ENCODE measurements at regions of chr9 and their contacts with region 1.

Region 1: DNA sequence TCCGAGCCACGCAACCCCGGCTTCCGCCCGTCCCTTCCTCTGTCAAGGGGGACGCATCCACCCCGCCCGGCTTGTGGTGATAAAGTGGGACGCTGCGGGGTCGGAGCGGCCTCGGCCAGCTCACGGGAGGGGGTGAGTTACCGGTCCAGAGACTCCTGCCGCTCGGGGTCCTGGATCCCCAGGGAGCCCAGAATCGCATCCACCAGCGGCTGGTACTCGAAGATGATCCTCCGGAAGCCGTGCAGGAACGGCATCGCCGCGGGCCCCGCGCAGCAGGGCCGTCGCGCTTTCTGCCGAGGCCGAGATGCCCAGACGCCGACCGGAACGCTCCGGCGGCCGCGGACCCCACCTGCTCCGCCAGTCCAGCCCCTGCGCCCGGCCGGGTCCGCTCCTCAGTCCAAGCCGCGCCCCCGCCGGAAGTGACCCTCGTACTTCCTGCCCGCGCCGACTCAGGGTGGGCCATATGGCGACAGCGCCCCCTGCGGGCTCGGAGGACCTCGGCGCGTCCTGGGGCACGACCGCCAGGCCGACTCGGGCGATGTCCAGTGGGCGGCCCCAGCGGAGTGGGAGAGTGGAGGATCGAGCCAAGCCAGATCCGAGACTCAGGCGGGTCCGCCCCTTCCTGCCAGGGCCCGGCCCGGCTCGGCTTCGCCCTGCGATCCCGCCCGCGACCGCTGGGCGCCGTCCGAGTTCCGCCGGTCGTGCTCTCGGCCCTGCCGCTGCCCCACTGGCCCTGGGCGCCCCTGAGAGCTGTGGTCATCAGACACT is at the start of gene ASB6:
- DNase-seq: peak; percentile 96
- ATAC-seq: peak; percentile 95
- H3K4me3 ChIP-seq: peak within 1 kb of the TSS; percentile 61 to 91 (median 84)
- H3K4me3 Mint-ChIP-seq: peak within 1 kb of the TSS; percentile 87
- H3K27ac ChIP-seq: peak within 1 kb of the TSS; percentile 54 to 86
- H3K27ac Mint-ChIP-seq: peak within 1 kb of the TSS; percentile 91
- H3K4me1 ChIP-seq: peaks cover 12 to 17% of the 10 kb centered on the region in 2 donors
- H3K4me1 Mint-ChIP-seq: peaks cover 26% of the 10 kb centered on the region
- H3K27me3 ChIP-seq: no peaks in the 10 kb centered on the region
- H3K27me3 Mint-ChIP-seq: no peaks in the 10 kb centered on the region
- CTCF ChIP-seq: peak; percentile 100
- total RNA-seq, gene ASB6: 24.8 and 27.7 TPM in 2 replicates

Region 2: DNA sequence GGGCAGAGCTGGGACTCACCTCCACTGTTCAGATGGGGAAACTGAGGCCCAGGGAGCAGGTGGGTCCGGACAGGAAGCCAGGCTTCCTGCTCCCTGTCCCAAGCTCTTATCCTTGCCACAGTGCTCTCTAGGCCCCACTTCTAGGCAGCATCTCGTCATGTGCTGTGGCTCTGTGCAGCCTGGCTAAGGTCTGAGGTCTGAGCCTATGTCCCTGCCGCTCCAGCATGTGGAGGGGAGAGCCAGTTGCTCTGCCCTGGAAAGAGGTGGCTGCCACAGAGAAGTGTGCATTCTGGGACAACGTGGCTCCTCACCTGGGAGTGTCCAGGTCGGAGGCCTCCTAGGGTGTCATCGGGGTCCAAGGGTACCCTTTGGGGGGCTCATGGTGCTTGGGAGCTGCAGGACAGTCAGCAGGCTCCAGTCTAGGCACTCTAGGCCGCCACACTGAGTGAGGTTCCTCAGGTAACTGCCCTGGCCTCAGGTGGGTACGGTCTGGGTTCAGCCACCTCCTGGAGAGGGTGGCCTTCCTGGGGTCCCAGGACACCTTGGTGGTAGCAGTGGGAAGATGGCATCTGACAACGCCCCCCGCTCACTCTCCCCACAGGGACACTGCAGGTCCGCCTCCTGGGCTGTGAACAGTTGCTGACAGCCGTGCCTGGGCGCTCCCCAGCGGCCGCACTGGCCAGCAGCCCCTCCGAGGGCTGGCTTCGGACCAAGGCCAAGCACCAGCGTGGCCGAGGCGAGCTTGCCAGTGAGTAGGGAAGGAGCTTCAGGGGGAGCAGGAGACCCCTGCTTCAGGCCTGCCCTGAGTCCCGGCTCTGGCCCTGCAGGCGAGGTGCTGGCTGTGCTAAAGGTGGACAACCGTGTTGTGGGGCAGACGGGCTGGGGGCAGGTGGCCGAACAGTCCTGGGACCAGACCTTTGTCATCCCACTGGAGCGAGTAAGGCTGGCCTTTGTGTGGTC is 929.2 kb before region 1 on chr9:
- CTCF ChIA-PET with region 1: no interaction called
- POLR2A ChIA-PET with region 1: no interaction called
- intact Hi-C with region 1: no loop called
- DNase-seq: no peak
- ATAC-seq: no peak
- H3K4me3 ChIP-seq: no peak overlapping the region
- H3K4me3 Mint-ChIP-seq: no peak overlapping the region
- H3K27ac ChIP-seq: no peak overlapping the region
- H3K27ac Mint-ChIP-seq: no peak overlapping the region
- H3K4me1 ChIP-seq: no peaks in the 10 kb centered on the region
- H3K4me1 Mint-ChIP-seq: no peaks in the 10 kb centered on the region
- H3K27me3 ChIP-seq: no peaks in the 10 kb centered on the region
- H3K27me3 Mint-ChIP-seq: no peaks in the 10 kb centered on the region
- CTCF ChIP-seq: no peak

Region 3: DNA sequence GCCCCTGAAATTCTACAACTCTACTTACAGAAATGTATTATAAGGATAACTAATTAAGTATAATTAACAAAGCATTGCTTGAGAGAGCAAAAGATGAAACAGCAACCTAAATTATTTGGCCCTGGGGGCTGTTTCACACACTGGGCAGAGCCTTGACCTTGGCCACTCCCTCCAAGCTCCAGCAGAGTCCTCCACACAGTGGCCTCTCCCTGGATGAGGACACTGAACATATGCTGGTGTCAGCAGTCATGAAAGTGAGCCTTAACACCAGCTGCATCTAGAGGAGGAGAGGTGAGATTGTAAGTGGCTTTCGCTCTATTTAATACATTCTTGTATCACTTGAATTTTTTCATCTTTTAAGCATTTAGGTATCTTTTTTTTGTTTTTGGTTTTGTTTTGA is 894.7 kb before region 1 on chr9:
- CTCF ChIA-PET with region 1: no interaction called
- POLR2A ChIA-PET with region 1: no interaction called
- intact Hi-C with region 1: no loop called
- DNase-seq: no peak
- ATAC-seq: no peak
- H3K4me3 ChIP-seq: no peak overlapping the region
- H3K4me3 Mint-ChIP-seq: no peak overlapping the region
- H3K27ac ChIP-seq: no peak overlapping the region
- H3K27ac Mint-ChIP-seq: no peak overlapping the region
- H3K4me1 ChIP-seq: no peaks in the 10 kb centered on the region
- H3K4me1 Mint-ChIP-seq: no peaks in the 10 kb centered on the region
- H3K27me3 ChIP-seq: no peaks in the 10 kb centered on the region
- H3K27me3 Mint-ChIP-seq: no peaks in the 10 kb centered on the region
- CTCF ChIP-seq: no peak

Region 4: DNA sequence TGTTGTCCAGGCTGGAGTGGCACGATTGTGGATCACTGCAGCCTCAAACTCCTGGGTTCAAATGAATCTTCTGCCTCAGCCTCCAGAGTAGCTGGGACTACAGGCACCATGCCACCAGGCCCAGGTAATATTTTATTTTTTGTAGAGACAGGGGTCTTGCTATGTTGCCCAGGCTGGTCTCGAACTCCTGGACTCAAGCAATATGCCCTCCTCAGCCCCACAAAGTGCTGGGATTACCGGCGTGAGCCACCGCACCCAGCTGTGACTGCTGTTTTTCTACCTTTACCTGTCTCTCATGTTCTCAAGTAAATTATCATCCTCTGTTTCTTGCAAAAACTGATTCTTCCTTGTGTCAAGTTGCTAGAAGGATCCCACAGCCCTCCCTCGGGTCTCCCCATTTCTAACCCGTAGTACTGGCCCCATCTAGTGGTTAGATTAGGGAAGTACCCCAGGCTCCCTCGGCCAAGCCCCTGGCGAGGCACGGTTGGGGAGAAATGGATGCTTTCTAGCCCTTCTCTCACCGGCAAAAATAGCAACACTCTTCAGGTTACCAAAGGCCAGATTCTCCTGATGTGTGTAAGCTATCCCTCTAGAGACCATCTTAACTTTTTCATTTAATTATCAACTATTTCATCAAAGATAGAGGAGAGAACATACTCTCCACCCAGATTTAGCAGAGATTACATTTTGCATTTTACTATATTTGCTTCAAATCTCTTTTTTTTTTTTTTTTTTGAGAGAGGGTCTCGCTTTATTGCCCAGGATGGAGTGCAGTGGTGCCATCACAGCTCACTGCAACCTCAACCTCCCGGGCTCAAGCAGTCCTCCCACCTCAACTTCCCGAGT is 141.8 kb after region 1 on chr9:
- CTCF ChIA-PET with region 1: interaction called, 6 read pairs
- POLR2A ChIA-PET with region 1: no interaction called
- intact Hi-C with region 1: loop called (anchors 1 kb)
- DNase-seq: peak; percentile 81
- ATAC-seq: peak; percentile 99
- H3K4me3 ChIP-seq: no peak overlapping the region
- H3K4me3 Mint-ChIP-seq: no peak overlapping the region
- H3K27ac ChIP-seq: no peak overlapping the region
- H3K27ac Mint-ChIP-seq: no peak overlapping the region
- H3K4me1 ChIP-seq: no peaks in the 10 kb centered on the region
- H3K4me1 Mint-ChIP-seq: no peaks in the 10 kb centered on the region
- H3K27me3 ChIP-seq: peaks cover 0 to 19% (median 1%) of the 10 kb centered on the region in 4 experiments
- H3K27me3 Mint-ChIP-seq: peaks cover 19% of the 10 kb centered on the region
- CTCF ChIP-seq: peak; percentile 89

Region 5: DNA sequence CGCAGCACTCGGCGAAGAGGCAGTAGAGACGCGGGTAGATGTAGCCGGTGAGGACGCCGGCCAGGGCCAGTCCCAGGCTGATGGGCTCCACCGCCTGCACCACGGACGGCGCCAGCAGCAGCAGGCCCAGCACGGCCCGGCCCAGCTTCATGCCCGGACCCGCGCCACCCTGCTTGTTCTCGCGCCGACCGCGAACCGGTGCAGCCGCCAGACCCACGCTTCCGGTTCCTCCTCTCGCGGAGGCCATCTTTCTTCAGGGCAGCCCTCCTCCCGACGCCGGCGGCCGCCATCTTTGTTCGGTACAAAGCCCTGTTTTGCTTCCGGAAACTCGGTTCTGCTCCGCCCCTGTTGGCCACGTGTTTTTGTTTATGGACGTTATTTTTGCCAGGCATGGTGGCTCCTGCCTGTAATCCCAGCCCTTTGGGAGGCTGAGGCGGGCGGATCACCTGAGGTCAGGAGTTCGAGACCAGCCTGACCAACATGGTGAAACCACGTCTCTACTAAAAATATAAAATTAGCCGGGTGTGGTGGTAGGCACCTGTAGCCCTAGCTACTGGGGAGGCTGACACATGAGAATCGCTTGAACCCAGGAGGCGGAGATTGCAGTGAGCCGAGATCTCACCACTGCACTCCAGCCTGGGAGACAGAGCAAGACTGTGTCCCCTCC is 182.1 kb after region 1 on chr9 and contains the start of gene TOR1A:
- CTCF ChIA-PET with region 1: no interaction called
- POLR2A ChIA-PET with region 1: no interaction called
- intact Hi-C with region 1: loop called (anchors 1 kb)
- DNase-seq: peak; percentile 95
- ATAC-seq: peak; percentile 92
- H3K4me3 ChIP-seq: peak within 1 kb of the TSS in 4 of 5 experiments; percentile 49 to 83 (median 76)
- H3K4me3 Mint-ChIP-seq: peak within 1 kb of the TSS; percentile 86
- H3K27ac ChIP-seq: peak within 1 kb of the TSS in 1 of 2 donors; percentile 68
- H3K27ac Mint-ChIP-seq: peak within 1 kb of the TSS; percentile 81
- H3K4me1 ChIP-seq: peaks cover 7 to 8% of the 10 kb centered on the region in 2 donors
- H3K4me1 Mint-ChIP-seq: peaks cover 16% of the 10 kb centered on the region
- H3K27me3 ChIP-seq: no peaks in the 10 kb centered on the region
- H3K27me3 Mint-ChIP-seq: no peaks in the 10 kb centered on the region
- CTCF ChIP-seq: no peak
- total RNA-seq, gene TOR1A: 30.3 and 35.3 TPM in 2 replicates

Measured in B cell (primary cell).